ENCODE measurements at regions of chr1 and their contacts with region 1.

Region 1: DNA sequence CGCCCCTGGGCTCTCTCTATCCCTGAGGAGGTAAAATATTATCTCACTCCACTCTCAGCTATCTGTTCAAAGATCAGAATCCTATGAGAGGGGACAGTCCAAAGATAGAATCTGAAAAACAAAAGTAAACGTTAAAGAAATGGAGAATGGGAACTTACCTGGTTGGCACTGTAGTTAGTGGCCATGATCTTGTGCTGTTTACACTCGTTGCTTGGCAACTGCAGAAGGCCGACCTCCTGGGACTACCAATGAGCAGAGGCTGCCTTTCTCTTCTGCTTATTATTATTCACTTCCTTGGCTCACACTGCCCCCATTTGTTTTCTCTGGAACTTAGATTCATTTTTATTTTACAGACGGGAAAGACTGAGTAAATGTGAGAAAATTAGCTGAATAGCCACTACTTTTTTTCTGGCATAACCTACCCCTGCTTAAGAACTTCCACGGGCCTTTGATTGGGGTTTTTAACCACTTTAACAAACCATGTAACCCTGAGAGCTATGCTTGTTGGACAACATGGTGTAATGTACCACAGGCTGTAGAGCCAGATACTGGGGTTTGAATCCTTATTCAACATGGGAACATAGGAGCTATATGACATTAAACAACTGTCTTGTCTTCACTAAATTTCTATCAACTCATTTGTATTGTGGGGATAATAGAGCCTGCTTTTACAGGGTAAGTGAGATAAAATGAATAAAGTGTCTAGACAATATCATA is at the start of gene CFAP126:
- DNase-seq: peak; percentile 82
- H3K4me3 ChIP-seq: no peak within 1 kb of the TSS
- H3K27ac ChIP-seq: peak within 1 kb of the TSS in 4 of 8 donors; percentile 24 to 75 (median 45)
- H3K4me1 ChIP-seq: peaks cover 0 to 19% (median 7%) of the 10 kb centered on the region in 6 donors
- H3K27me3 ChIP-seq: no peaks in the 10 kb centered on the region
- CTCF ChIP-seq: peak in 7 of 11 experiments; percentile 26 to 39 (median 38)
- POLR2A ChIP-seq: no peak
- total RNA-seq, gene CFAP126: not detected

Region 2: GRCh38 chr1:161145832-161146231 is 222.0 kb before region 1 on chr1:
- intact Hi-C with region 1: no loop called
- DNase-seq: peak; percentile 6
- H3K4me3 ChIP-seq: no peak overlapping the region
- H3K27ac ChIP-seq: no peak overlapping the region
- H3K4me1 ChIP-seq: no peaks in the 10 kb centered on the region
- H3K27me3 ChIP-seq: no peaks in the 10 kb centered on the region
- CTCF ChIP-seq: no peak
- POLR2A ChIP-seq: no peak

Region 3: GRCh38 chr1:161285521-161285920 is 82.3 kb before region 1 on chr1:
- intact Hi-C with region 1: no loop called
- DNase-seq: no peak
- H3K4me3 ChIP-seq: no peak overlapping the region
- H3K27ac ChIP-seq: no peak overlapping the region
- H3K4me1 ChIP-seq: peaks cover 0 to 6% (median 0%) of the 10 kb centered on the region in 6 donors
- H3K27me3 ChIP-seq: no peaks in the 10 kb centered on the region
- CTCF ChIP-seq: no peak
- POLR2A ChIP-seq: no peak

Region 4: GRCh38 chr1:161314201-161314981 is 53.5 kb before region 1 on chr1 and contains the start of gene SDHC:
- intact Hi-C with region 1: loop called (anchors 10 kb)
- DNase-seq: peak; percentile 97
- H3K4me3 ChIP-seq: peak within 1 kb of the TSS; percentile 68 to 92 (median 88)
- H3K27ac ChIP-seq: peak within 1 kb of the TSS; percentile 92 to 97 (median 94)
- H3K4me1 ChIP-seq: peaks cover 10 to 47% (median 25%) of the 10 kb centered on the region in 6 donors
- H3K27me3 ChIP-seq: no peaks in the 10 kb centered on the region
- CTCF ChIP-seq: no peak
- POLR2A ChIP-seq: peak in 1 of 3 donors; percentile 56
- total RNA-seq, gene SDHC: 95.6 to 170 (median 147) TPM

Region 5: DNA sequence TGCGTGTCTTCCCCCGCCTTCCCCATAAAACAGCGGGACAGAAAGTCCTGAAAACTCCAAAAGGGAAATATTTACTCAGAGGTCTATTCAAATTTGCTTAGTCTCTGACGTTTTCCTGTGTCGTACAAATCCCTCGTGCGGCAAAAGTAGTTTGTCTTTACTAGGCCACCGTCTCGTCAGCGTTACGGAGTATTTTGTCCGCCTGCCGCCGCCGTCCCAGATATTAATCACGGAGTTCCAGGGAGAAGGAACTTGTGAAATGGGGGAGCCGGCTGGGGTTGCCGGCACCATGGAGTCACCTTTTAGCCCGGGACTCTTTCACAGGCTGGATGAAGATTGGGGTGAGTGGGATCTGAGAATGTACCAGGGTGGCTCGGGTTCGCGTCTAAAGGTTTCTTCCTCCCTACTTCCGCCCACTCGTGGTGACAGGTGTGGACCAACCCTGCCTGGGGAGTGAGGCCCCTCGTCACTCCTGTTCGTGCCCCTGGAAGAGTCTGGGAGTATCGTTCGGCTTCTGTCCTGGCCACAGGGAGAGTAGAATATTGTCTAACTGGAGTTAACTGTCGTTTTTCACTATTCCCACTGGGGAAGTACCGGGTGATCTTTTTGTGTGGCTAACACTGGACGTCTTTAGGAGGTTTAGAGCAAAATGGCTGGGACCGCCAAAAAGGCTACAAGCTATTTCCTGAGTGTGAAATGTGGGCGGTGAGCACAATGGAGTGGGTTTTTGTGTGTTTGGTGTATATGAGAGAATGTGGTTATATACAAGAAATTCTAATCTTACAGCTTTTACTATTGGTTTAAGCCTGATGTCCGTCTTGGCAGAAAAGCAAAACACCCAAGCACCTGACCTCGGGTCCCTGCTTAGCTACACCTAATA is 398.5 kb after region 1 on chr1 and contains the start of gene ATF6:
- intact Hi-C with region 1: no loop called
- DNase-seq: peak; percentile 92
- H3K4me3 ChIP-seq: peak within 1 kb of the TSS; percentile 71 to 90 (median 76)
- H3K27ac ChIP-seq: peak within 1 kb of the TSS; percentile 74 to 94 (median 90)
- H3K4me1 ChIP-seq: peaks cover 21 to 68% (median 54%) of the 10 kb centered on the region in 6 donors
- H3K27me3 ChIP-seq: no peaks in the 10 kb centered on the region
- CTCF ChIP-seq: peak in 1 of 11 experiments; percentile 10
- POLR2A ChIP-seq: peak in 1 of 3 donors; percentile 52
- total RNA-seq, gene ATF6: 25.2 to 46.8 (median 34.2) TPM

Measured in spleen (tissue), 13 donors.